Caco-2 (cell line): ENCODE measurements at regions of chr3 and their contacts with region 1.

Region 1: GRCh38 chr3:33883538-33883950 is 85.1 kb downstream of the PDCD6IP start:
- DNase-seq: peak in 1 of 2 experiments; percentile 48
- H3K4me3 ChIP-seq: no peak overlapping the region
- H3K4me3 Mint-ChIP-seq: no peak overlapping the region
- H3K27ac Mint-ChIP-seq: no peak overlapping the region
- H3K4me1 ChIP-seq: no peaks in the 10 kb centered on the region
- H3K4me1 Mint-ChIP-seq: no peaks in the 10 kb centered on the region
- H3K27me3 ChIP-seq: no peaks in the 10 kb centered on the region; the same call in 1 of the 2 replicates
- H3K27me3 Mint-ChIP-seq: peaks cover 9% of the 10 kb centered on the region
- CTCF ChIP-seq: peak; percentile 58 to 72

Region 2: GRCh38 chr3:33855884-33856546 is 27.5 kb before region 1 on chr3:
- CTCF ChIA-PET with region 1: no interaction called
- POLR2A ChIA-PET with region 1: no interaction called
- intact Hi-C with region 1: no loop called
- DNase-seq: no peak
- H3K4me3 ChIP-seq: no peak overlapping the region
- H3K4me3 Mint-ChIP-seq: no peak overlapping the region
- H3K27ac Mint-ChIP-seq: no peak overlapping the region
- H3K4me1 ChIP-seq: no peaks in the 10 kb centered on the region
- H3K4me1 Mint-ChIP-seq: no peaks in the 10 kb centered on the region
- H3K27me3 ChIP-seq: no peaks in the 10 kb centered on the region
- H3K27me3 Mint-ChIP-seq: no peaks in the 10 kb centered on the region
- CTCF ChIP-seq: no peak

Region 3: GRCh38 chr3:33954956-33955355 is 71.4 kb after region 1 on chr3:
- CTCF ChIA-PET with region 1: no interaction called
- POLR2A ChIA-PET with region 1: no interaction called
- intact Hi-C with region 1: loop called (anchors 5 kb)
- DNase-seq: peak; percentile 38 to 39
- H3K4me3 ChIP-seq: no peak overlapping the region
- H3K4me3 Mint-ChIP-seq: no peak overlapping the region
- H3K27ac Mint-ChIP-seq: no peak overlapping the region
- H3K4me1 ChIP-seq: no peaks in the 10 kb centered on the region
- H3K4me1 Mint-ChIP-seq: no peaks in the 10 kb centered on the region
- H3K27me3 ChIP-seq: no peaks in the 10 kb centered on the region
- H3K27me3 Mint-ChIP-seq: peaks cover 11% of the 10 kb centered on the region
- CTCF ChIP-seq: peak; percentile 42 to 44

Region 4: GRCh38 chr3:34012102-34012461 is 128.5 kb after region 1 on chr3:
- CTCF ChIA-PET with region 1: interaction called, 8 read pairs
- POLR2A ChIA-PET with region 1: no interaction called
- intact Hi-C with region 1: loop called (anchors 1 kb)
- DNase-seq: peak; percentile 78 to 82
- H3K4me3 ChIP-seq: no peak overlapping the region
- H3K4me3 Mint-ChIP-seq: no peak overlapping the region
- H3K27ac Mint-ChIP-seq: peak overlapping the region; percentile 67
- H3K4me1 ChIP-seq: peaks cover 49% of the 10 kb centered on the region
- H3K4me1 Mint-ChIP-seq: peaks cover 35% of the 10 kb centered on the region
- H3K27me3 ChIP-seq: no peaks in the 10 kb centered on the region
- H3K27me3 Mint-ChIP-seq: no peaks in the 10 kb centered on the region
- CTCF ChIP-seq: no peak

Region 5: DNA sequence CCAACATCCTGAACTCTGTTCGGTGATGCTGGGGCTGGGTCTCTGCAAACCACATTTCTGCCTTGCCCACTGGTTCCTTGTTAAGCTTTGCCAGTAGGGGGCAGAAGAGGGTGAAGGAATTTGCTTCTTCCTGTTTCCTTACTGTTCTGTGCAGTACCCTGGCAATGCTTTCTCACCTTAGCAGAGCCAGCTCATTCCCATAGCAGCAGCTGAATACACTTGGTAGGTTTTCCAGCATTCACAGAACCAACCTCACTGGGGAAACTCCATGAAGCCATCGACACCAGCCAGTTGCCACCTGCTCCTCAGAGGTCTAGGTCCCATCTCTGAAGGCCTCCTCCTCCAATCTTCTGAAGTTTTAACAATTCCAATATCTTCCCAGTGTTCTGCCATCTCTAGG is 223.3 kb after region 1 on chr3:
- CTCF ChIA-PET with region 1: interaction called, 3 read pairs
- POLR2A ChIA-PET with region 1: no interaction called
- intact Hi-C with region 1: loop called (anchors 5 kb)
- DNase-seq: peak in 1 of 2 experiments; percentile 38
- H3K4me3 ChIP-seq: no peak overlapping the region
- H3K4me3 Mint-ChIP-seq: no peak overlapping the region
- H3K27ac Mint-ChIP-seq: no peak overlapping the region
- H3K4me1 ChIP-seq: no peaks in the 10 kb centered on the region
- H3K4me1 Mint-ChIP-seq: no peaks in the 10 kb centered on the region
- H3K27me3 ChIP-seq: no peaks in the 10 kb centered on the region; the same call in 1 of the 2 replicates
- H3K27me3 Mint-ChIP-seq: peaks cover 11% of the 10 kb centered on the region
- CTCF ChIP-seq: peak in 1 of 2 experiments; percentile 56

Region 6: GRCh38 chr3:34387826-34388564 is 504.5 kb after region 1 on chr3:
- CTCF ChIA-PET with region 1: no interaction called
- POLR2A ChIA-PET with region 1: no interaction called
- intact Hi-C with region 1: loop called (anchors 5 kb)
- DNase-seq: peak in 1 of 2 experiments; percentile 9
- H3K4me3 ChIP-seq: no peak overlapping the region
- H3K4me3 Mint-ChIP-seq: no peak overlapping the region
- H3K27ac Mint-ChIP-seq: no peak overlapping the region
- H3K4me1 ChIP-seq: no peaks in the 10 kb centered on the region
- H3K4me1 Mint-ChIP-seq: no peaks in the 10 kb centered on the region
- H3K27me3 ChIP-seq: no peaks in the 10 kb centered on the region
- H3K27me3 Mint-ChIP-seq: no peaks in the 10 kb centered on the region
- CTCF ChIP-seq: peak in 1 of 2 experiments; percentile 33

Region 7: GRCh38 chr3:34683851-34684250 is 800.3 kb after region 1 on chr3:
- CTCF ChIA-PET with region 1: interaction called, 13 read pairs
- POLR2A ChIA-PET with region 1: no interaction called
- intact Hi-C with region 1: loop called (anchors 1 kb)
- DNase-seq: peak; percentile 65 to 75
- H3K4me3 ChIP-seq: no peak overlapping the region
- H3K4me3 Mint-ChIP-seq: no peak overlapping the region
- H3K27ac Mint-ChIP-seq: no peak overlapping the region
- H3K4me1 ChIP-seq: peaks cover 8% of the 10 kb centered on the region
- H3K4me1 Mint-ChIP-seq: no peaks in the 10 kb centered on the region
- H3K27me3 ChIP-seq: no peaks in the 10 kb centered on the region
- H3K27me3 Mint-ChIP-seq: no peaks in the 10 kb centered on the region
- CTCF ChIP-seq: peak; percentile 66 to 76